WTC11 (cell line): ENCODE measurements at regions of chr4 and their contacts with region 1.

Region 1: DNA sequence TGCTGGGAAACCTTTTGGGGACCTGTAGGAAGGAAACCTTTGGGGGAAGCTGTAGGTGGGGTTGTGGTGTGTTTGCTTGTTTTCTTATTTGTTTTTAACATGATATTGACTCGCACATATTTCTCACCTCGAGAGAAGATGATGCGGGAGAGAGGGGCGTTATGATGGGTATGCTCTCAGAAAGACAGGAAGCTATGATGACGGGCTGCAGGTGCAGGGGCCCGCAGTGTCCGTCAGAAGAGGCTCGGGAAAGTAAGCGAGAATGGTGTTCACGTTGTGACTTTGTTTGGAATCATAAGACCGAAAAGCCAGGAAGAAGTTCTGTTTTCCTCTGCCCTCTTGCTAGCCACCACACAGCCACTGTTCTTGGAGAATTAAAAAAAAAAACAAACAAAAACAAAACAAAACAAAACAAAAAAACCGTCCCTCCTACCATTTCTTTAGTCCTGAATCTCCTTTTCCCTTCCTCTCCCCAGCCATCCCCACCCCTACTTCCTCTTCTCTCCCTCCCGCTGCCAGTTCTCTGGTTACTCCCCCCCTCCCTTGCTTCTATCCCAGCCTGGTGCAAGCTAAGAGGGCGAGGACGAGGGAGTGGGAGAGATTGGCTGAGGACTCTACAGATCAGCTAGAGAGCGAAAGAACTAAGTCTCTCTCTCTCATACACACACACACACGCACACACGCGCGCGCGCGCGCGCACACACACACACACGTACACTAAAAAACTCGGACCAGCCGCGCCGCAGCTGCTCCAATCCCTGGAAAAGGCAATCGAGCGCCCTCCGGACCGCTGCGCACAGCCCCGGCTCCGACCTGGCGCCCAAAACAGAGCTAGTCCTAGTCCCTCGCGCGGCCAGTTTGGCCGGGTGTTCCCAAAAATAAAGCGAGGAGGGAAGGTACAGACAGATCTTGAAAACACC is at the start of gene BMP3:
- DNase-seq: peak; percentile 36
- ATAC-seq: peak; percentile 85
- H3K4me3 Mint-ChIP-seq: peak within 1 kb of the TSS; percentile 97
- H3K27ac Mint-ChIP-seq: no peak within 1 kb of the TSS
- H3K4me1 Mint-ChIP-seq: peaks cover 35% of the 10 kb centered on the region
- H3K27me3 Mint-ChIP-seq: peaks cover 67% of the 10 kb centered on the region
- CTCF ChIP-seq: no peak
- total RNA-seq, gene BMP3: 0.53 to 0.55 TPM (median 0.55 TPM) in 3 replicates

Region 2: DNA sequence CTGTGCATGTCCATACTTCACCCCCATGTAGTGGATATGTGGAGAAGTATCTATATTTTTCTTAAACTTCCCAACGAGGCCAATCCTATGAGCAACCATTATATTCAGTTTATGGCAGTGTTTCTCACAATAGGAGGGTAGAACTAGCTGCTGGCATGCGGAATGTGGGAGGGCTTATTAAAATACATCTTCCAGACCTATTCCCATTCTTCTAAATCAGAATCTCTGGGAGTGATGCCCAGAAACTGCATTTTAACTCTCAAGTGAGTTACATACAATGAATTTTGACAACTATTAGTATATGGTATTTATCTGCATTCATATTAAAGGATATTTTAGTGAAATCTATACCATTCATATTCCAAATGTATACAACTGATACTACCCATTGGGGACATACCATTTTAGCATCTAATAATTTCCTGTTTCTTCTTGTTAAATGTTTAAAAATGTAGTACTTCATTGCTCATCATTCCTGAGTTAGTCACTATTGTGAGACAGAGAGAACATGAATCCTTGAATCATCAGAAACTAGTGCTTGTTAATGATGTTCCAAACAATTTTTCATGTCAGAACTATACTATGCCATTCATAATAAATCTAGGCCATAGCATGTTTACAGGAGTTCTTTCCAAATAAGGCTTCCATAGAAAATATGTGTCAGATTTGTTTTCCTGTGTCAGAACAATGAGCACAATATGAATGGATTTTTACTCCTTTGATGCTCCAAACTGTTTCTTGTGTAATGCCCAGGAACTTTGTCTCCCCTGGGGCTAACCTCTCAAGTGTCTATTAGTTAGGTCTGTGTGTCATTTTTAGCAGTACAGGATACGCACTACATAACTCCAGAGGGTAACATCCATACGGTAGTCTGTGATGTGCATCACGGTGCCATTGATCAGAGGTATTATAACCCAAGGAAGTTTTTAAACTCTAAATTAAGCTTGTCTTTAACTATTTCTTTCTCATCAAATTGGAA is 198.6 kb before region 1 on chr4:
- CTCF ChIA-PET with region 1: no interaction called
- POLR2A ChIA-PET with region 1: no interaction called
- DNase-seq: no peak
- ATAC-seq: no peak
- H3K4me3 Mint-ChIP-seq: no peak overlapping the region
- H3K27ac Mint-ChIP-seq: no peak overlapping the region
- H3K4me1 Mint-ChIP-seq: no peaks in the 10 kb centered on the region
- H3K27me3 Mint-ChIP-seq: no peaks in the 10 kb centered on the region
- CTCF ChIP-seq: no peak

Region 3: DNA sequence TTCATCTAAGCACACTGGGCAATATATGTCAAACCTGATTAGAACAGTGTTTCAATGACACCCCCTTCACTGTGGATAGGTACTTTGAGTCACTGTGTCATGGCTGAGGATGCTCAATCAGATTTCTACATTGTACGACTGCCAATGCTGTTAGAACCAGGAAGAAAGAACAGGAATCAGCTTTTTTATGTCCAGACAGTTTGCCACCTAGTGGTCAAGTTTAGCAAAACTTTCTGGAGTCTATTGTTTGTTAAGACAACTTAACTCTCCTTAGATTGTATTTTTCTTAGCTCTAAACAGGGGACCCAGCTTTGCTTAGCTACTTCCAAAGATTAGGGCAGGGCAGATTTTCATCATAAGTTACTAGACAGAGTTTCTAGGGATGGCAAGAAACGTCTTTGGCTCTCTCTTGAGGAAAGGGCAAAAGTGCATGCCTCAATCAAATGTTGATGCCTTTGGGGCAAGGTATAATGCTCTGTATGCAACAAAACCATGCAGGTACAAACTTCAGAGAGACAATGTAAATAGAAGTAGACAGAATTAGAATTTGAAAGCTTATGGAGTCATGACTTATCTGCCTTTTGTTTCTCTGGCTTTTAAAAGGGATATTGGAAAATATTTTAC is 40.3 kb before region 1 on chr4:
- CTCF ChIA-PET with region 1: interaction called, 16 read pairs
- POLR2A ChIA-PET with region 1: no interaction called
- DNase-seq: no peak
- ATAC-seq: peak; percentile 59
- H3K4me3 Mint-ChIP-seq: no peak overlapping the region
- H3K27ac Mint-ChIP-seq: no peak overlapping the region
- H3K4me1 Mint-ChIP-seq: peaks cover 11% of the 10 kb centered on the region
- H3K27me3 Mint-ChIP-seq: no peaks in the 10 kb centered on the region
- CTCF ChIP-seq: peak; percentile 38; the same call in 1 of the 2 replicates